Ovary (tissue), 10 donors: ENCODE measurements at regions of chr4 and their contacts with region 1.

Region 1: GRCh38 chr4:7802093-7802726 is 137.5 kb downstream of the AFAP1 start:
- DNase-seq: peak; percentile 70 to 90 (median 83)
- H3K4me3 ChIP-seq: no peak overlapping the region
- H3K27ac ChIP-seq: no peak overlapping the region
- H3K4me1 ChIP-seq: peaks cover 6% of the 10 kb centered on the region
- H3K27me3 ChIP-seq: no peaks in the 10 kb centered on the region
- CTCF ChIP-seq: peak; percentile 81 to 83 (median 82)
- EP300 ChIP-seq: no peak
- POLR2A ChIP-seq: no peak

Region 2: GRCh38 chr4:6742989-6743388 is 1059.2 kb before region 1 on chr4:
- intact Hi-C with region 1: no loop called
- DNase-seq: no peak
- H3K4me3 ChIP-seq: no peak overlapping the region
- H3K27ac ChIP-seq: no peak overlapping the region
- H3K4me1 ChIP-seq: peaks cover 2% of the 10 kb centered on the region
- H3K27me3 ChIP-seq: no peaks in the 10 kb centered on the region
- CTCF ChIP-seq: no peak
- EP300 ChIP-seq: no peak
- POLR2A ChIP-seq: no peak

Region 3: DNA sequence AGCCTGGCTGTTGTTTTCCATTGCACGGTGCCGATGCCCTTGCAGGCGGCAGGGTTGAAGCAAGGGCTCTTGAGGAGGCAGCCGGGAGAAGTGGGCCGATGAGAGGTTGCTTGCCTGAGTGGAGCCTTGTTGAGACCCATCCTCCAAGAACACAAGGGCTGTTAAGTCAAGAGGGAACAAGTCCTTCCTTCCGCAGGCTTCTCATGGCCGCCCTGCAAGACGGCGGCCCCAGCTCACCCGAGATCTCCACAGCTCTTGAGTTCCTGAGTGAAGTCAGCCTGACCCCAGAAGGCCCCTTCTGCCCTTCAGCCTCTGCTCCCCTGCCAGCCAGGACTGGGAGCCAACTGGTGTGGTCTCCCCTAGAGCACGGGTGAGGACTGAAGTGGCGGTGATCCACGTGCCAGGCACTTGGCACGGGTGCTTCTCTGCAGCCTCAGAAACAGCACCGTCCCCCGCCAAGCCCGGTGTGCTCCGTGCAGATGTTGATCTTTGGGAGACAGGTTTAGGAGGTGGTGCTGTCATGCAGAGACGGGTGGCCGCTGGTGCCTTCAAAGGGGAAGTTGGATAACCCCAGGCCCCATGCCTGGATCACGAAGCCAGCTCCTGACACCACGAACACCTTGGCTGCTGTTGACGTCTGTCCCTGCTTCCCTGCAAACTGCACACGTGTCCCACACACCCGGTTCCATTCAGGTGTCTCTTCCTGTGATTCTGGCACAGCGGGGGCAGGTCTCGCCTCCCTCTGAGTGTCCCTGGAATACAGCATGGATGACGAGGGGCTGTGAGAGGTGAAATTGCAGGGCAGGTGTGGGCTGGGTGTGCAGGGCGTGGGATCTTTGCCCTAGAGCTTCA is 203.0 kb before region 1 on chr4:
- intact Hi-C with region 1: no loop called
- DNase-seq: no peak
- H3K4me3 ChIP-seq: no peak overlapping the region
- H3K27ac ChIP-seq: no peak overlapping the region
- H3K4me1 ChIP-seq: no peaks in the 10 kb centered on the region
- H3K27me3 ChIP-seq: no peaks in the 10 kb centered on the region
- CTCF ChIP-seq: no peak
- EP300 ChIP-seq: no peak
- POLR2A ChIP-seq: no peak

Region 4: DNA sequence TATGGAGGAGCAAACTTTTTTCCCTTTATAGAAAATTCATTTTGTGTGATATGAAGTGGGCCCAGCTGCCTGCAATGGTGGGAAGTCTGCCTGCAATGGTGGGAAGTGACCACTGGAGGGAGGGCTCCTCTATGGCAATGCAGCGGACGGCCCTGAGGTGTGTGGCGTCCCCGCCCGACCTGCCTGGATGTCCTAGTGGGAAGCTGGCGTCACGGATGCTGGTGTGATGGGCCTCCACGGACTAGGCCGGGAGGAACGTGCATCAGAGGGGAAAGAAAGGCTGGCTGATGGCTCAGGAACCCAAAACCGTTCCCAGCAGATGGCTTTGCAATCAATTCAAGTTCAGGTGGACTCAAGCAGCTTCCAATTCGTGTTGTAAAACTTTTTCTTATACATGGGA is 40.5 kb before region 1 on chr4:
- intact Hi-C with region 1: loop called in 3 of 4 experiments (anchors 1 to 5 kb)
- DNase-seq: peak; percentile 63 to 83 (median 76)
- H3K4me3 ChIP-seq: no peak overlapping the region
- H3K27ac ChIP-seq: no peak overlapping the region
- H3K4me1 ChIP-seq: peaks cover 2% of the 10 kb centered on the region
- H3K27me3 ChIP-seq: no peaks in the 10 kb centered on the region
- CTCF ChIP-seq: peak; percentile 74 to 88 (median 78)
- EP300 ChIP-seq: no peak
- POLR2A ChIP-seq: no peak

Region 5: DNA sequence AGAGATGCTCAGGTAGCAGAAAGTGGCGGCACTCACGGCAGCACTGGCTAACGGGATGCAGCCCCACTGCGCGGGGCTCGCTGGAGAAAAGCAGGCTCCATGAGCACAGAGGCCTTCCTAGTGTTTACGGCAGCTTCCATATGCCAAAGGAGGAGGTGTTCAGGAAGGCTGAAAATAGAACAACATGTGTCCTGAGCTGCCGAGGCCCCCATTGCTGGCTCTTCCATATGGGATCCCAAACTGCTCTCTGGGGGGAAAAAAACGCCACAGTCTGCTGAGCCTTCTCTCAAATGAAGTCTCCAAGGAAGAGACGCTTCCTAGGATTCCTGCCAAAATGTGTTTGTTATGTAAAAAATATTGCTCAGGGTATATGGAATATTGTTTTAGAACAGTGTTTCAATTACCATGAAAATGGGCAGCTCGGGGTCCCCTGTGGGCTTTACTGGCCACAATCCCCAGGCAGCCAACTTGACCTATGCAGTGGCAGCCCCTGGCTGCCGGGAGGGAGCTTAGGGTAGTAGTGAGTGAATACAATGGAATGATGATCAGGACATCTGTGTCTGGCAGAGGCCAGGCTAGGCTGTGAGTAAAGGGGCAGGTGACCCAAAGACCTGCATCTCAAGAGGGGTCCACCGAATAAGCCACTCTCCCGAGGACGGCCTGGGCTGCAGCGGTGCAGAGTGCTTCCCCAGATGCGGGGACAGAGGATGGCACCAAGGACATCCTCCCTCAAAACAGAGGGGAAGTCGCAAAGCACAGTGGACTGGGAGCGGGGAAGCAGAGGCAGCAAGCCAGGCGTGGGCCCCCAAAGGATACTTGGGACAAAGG is 32.6 kb before region 1 on chr4:
- intact Hi-C with region 1: loop called in 2 of 4 experiments (anchors 5 kb)
- DNase-seq: peak in 1 of 5 donors; percentile 29
- H3K4me3 ChIP-seq: no peak overlapping the region
- H3K27ac ChIP-seq: no peak overlapping the region
- H3K4me1 ChIP-seq: peaks cover 3% of the 10 kb centered on the region
- H3K27me3 ChIP-seq: no peaks in the 10 kb centered on the region
- CTCF ChIP-seq: no peak
- EP300 ChIP-seq: no peak
- POLR2A ChIP-seq: no peak

Region 6: GRCh38 chr4:7843831-7844593 is 41.8 kb after region 1 on chr4:
- intact Hi-C with region 1: loop called in 1 of 4 experiments (anchors 5 kb)
- DNase-seq: peak; percentile 69 to 86 (median 79)
- H3K4me3 ChIP-seq: no peak overlapping the region
- H3K27ac ChIP-seq: peak overlapping the region; percentile 75 to 79
- H3K4me1 ChIP-seq: peaks cover 18% of the 10 kb centered on the region
- H3K27me3 ChIP-seq: no peaks in the 10 kb centered on the region
- CTCF ChIP-seq: peak; percentile 30 to 62 (median 62)
- EP300 ChIP-seq: no peak
- POLR2A ChIP-seq: no peak

Region 7: DNA sequence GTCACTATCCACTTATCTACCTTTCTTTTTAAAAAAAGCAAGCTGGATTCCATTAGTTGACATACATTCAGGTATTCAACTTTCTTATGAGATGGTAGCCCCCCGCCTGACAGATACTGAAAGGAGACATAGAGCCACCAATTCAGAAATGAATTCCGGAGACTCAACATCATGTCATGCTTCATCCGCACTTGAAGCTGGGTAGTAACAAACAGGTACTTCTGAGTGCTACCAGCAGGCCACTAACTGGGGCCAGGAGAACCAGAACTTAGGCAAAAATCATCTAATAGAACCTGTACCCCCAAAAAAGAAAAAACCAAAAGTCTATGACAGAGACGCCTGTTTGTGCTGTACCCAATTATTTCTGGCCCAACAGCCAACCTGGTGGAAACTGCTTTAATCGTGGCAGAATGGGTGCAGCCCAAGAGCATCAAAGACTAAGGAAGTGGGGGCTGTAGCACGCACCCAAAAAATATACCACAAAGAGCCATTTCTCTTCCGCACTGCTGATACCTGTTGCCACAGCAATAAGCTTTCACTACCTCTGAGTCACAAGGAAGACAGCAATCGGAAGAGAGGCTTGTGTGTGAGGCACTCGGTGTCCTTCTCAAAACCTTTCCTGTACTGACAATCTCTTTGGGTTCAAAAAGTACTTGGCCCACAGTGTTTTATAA is 52.6 kb after region 1 on chr4:
- intact Hi-C with region 1: no loop called
- DNase-seq: no peak
- H3K4me3 ChIP-seq: no peak overlapping the region
- H3K27ac ChIP-seq: no peak overlapping the region
- H3K4me1 ChIP-seq: peaks cover 3% of the 10 kb centered on the region
- H3K27me3 ChIP-seq: no peaks in the 10 kb centered on the region
- CTCF ChIP-seq: no peak
- EP300 ChIP-seq: no peak
- POLR2A ChIP-seq: no peak

Region 8: GRCh38 chr4:7939377-7940108 is 137.3 kb after region 1 on chr4 and contains the start of gene AFAP1:
- intact Hi-C with region 1: loop called in 1 of 4 experiments (anchors 10 kb)
- DNase-seq: peak; percentile 88 to 94 (median 92)
- H3K4me3 ChIP-seq: peak within 1 kb of the TSS; percentile 51
- H3K27ac ChIP-seq: peak within 1 kb of the TSS; percentile 55 to 58
- H3K4me1 ChIP-seq: peaks cover 1% of the 10 kb centered on the region
- H3K27me3 ChIP-seq: no peaks in the 10 kb centered on the region
- CTCF ChIP-seq: no peak
- EP300 ChIP-seq: no peak
- POLR2A ChIP-seq: peak; percentile 70
- total RNA-seq, gene AFAP1: 8.6 to 42.3 (median 24.5) TPM

Region 9: DNA sequence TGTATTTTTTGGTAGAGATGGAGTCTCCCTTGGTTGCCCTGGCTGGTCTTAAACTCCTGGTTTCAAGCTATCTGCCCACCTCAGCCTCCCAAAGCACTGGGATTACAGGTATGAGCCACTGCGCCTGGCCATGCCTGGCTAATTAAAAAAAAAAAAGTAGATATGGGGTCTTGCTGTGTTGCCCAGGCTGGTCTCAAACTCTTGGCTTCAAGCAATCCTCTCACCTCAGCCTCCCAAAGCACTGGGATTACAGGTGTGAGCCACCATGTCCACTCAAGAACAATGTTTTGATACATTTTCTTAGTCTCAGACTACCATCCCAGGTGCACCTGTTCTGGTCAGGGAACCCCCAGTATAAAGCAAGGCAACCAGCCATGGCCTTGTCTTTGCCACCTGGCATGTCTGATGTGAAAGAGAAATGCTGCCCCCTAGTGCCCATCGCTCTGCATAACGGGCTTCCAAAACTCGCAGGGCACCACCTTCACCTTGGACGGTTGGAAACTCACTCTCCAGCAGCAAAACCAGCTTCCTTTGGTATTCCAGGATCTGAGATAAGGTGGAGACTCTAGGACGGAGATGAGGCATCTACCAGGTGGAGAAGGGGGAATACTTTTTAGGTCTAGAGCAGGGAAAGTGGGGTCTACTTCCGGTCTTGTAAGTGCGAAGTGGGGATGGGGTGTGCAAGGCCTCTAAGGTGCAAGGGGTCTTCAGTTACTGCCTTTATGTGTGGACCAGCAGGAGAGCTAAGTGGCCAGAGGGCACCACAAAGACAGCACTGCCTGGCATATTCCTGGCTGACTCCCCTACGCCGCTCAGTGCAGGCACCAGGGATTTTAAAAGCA is 185.2 kb after region 1 on chr4:
- intact Hi-C with region 1: loop called (anchors 1 to 5 kb)
- DNase-seq: peak; percentile 64 to 79 (median 75)
- H3K4me3 ChIP-seq: no peak overlapping the region
- H3K27ac ChIP-seq: no peak overlapping the region
- H3K4me1 ChIP-seq: peaks cover 5% of the 10 kb centered on the region
- H3K27me3 ChIP-seq: no peaks in the 10 kb centered on the region
- CTCF ChIP-seq: peak; percentile 65 to 79 (median 76)
- EP300 ChIP-seq: no peak
- POLR2A ChIP-seq: no peak